ENCODE measurements at regions of chr7 and their contacts with region 1.

Region 1: DNA sequence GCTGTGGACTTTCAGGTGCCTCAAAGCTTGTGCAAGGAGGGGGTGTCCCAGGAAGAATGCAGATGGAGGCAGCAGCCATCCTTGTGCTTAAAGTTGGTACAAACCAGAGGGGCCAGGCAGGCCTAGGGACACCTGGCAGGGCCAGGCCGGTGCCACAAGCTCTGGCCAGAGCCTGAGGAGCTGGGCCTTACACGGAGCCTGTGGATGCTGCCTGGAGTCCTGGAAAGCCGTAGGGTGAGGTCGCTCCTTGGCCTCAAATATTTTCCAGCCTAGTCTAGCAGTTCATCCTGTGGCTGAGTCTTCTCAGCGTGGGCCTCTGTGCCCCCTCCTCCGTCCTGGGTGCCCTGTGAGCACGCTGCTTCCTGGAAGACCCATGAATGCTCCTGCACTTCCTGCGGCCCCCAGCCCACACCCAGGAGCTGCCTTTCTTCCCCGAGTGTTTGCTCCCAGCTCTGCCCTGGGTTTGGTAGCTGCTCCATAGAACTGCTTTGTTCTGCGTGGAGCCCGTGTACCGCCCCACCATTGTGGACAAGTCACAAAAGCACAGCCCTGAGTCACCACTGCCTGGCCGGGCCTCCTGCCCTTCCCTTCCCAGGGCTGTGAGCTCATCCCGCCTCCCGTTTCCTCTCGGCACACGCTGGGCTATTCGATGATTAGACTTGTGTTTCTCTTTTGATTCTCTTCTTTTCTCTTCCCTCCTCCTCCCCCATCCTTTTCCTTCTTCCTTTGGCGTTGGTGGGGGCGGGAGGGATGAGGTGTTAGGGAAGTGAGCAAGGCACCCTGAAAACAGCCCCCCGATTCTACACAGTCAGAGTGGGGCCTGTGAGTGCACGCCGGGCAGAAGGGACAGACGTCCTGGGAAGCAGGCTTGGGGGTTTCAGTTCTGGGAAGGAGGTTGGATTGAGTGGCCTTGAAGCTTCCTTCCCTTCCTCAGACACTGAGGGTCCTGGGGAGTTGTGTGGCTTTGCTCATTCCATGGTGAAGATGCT is 73.2 kb upstream of the SHH start:
- DNase-seq: peak; percentile 81
- H3K4me3 ChIP-seq: no peak overlapping the region
- H3K27ac ChIP-seq: peak overlapping the region; percentile 66
- H3K4me1 ChIP-seq: peaks cover 5% of the 10 kb centered on the region
- H3K27me3 ChIP-seq: no peaks in the 10 kb centered on the region
- CTCF ChIP-seq: no peak
- POLR2A ChIP-seq: no peak

Region 2: DNA sequence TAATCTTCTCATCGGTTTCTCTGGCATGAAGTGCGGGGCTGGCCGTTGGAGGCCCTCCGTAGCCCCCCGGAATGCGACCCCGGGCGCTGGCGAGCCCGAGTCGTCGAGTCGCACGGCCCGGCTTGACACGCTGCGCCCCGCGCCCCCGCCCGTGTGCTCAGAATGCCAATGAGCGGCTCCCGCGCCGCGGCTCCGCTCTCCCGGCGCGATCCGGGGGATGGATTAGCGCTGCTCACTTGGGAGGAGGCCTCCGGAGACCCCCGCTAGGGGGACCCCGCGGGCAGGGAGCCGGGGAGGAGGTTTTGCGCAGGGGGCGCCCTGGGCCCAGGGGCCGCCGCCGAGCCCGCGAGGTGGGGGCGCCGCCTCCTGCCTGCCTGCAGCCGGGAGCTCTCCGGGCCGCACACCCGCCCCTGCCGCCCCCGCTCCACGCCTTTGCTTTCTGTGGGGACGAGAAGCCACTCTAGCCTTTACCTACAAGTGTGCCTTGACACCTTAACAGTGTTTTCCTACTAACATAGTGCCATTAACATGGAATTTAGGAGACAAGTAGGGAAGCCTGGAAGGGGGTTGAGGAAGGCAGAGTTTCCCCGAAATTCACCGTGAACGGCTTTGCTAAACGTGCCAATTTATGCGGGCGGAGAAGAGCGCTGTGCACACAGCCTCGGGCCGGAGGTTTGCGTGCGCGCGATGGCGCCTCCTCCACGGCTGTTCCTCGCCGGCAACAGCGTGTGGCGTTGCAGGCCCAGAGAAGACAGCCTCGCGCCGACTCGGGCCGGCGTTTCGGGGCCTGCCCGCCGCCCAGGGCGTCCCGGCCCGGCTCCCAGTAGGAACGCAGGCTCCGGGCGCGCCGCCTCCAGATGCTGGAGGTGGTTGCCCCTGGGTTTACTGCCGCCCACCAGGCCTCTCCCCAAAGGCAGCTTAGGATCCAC is 80.3 kb before region 1 on chr7:
- CTCF ChIA-PET with region 1: no interaction called
- POLR2A ChIA-PET with region 1: no interaction called
- dilution Hi-C with region 1: no loop called
- intact Hi-C with region 1: loop called (anchors 5 kb)
- DNase-seq: peak; percentile 69
- H3K4me3 ChIP-seq: peak overlapping the region; percentile 12 to 56 (median 31)
- H3K27ac ChIP-seq: no peak overlapping the region
- H3K4me1 ChIP-seq: peaks cover 29% of the 10 kb centered on the region
- H3K27me3 ChIP-seq: peaks cover 14 to 58% of the 10 kb centered on the region in 2 experiments
- CTCF ChIP-seq: peak; percentile 50 to 80
- POLR2A ChIP-seq: no peak

Measured in endothelial cell of umbilical vein (primary cell).